Left ventricle myocardium superior (tissue), 1 donor: ENCODE measurements at regions of chrX and their contacts with region 1.

Region 1: GRCh38 chrX:87664381-87664780 is 146.8 kb downstream of the KLHL4 start:
- DNase-seq: no peak
- ATAC-seq: no peak

Region 2: DNA sequence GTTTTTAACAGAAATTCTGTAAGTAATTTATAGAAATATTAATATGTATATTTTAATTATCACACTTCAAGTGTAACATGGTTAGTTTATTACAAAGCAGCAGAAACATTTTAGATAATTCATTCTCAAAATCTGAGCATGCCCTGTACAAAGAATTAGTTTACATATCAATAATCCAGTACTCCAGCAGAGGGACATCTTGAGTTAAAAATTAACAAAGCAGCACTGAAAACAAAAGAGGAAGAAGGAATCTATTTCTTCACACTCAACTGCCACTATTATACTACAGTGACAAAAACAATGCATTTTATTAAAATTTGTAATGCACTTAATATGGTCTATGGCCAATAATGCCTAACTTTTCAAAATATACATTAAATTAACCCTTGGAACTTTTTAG is 325.9 kb before region 1 on chrX:
- intact Hi-C with region 1: loop called (anchors 10 kb)
- DNase-seq: no peak
- ATAC-seq: no peak